ENCODE measurements at regions of chr19 and their contacts with region 1.

Region 1: GRCh38 chr19:41310033-41310758 is at the start of gene CCDC97:
- DNase-seq: peak; percentile 93
- CTCF ChIP-seq: no peak

Region 2: GRCh38 chr19:41206926-41207750 is 103.1 kb before region 1 on chr19:
- CTCF ChIA-PET with region 1: interaction called, 30 read pairs
- POLR2A ChIA-PET with region 1: no interaction called
- DNase-seq: no peak
- CTCF ChIP-seq: no peak

Region 3: GRCh38 chr19:41288673-41289505 is 21.3 kb before region 1 on chr19:
- CTCF ChIA-PET with region 1: interaction called, 124 read pairs
- POLR2A ChIA-PET with region 1: no interaction called
- DNase-seq: no peak
- CTCF ChIP-seq: no peak

Region 4: GRCh38 chr19:41334793-41335192 is 24.6 kb after region 1 on chr19:
- CTCF ChIA-PET with region 1: interaction called, 16 read pairs
- POLR2A ChIA-PET with region 1: interaction called, 3 read pairs
- DNase-seq: no peak
- CTCF ChIP-seq: no peak

Measured in GM10248 (cell line).